Left colon (tissue), 2 donors: ENCODE measurements at regions of chr2 and their contacts with region 1.

Region 1: GRCh38 chr2:218849721-218850120 is 9.9 kb upstream of the WNT6 start:
- DNase-seq: no peak
- ATAC-seq: no peak

Region 2: DNA sequence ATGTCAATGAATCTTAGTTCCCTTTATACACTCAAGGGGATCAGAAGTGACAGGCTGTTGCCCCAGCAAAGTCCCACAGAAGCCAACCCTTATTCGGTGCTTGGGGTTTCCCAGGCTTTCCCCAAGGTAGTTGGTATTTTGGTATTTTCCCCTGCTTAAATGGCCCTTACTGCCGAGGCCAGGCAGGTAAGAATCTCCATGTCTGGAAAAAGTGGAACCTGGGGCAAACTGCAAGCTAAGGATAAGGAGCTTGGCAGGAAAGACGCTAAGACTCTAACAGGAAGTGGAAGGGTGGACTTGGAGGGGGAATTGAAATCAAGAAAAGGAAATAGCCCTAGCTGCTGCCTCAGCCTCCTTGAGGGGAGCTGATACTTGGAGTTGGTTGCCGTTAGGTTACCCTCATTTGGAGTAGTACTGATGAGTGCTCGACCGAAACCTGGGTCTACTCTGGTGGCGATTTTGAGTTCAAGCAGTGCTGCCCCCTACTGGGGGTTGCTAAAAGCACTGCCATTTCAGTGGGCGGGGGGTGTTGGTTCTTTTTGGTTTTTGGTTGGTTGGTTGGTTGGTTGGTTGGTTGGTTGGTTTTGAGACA is 592.2 kb before region 1 on chr2:
- intact Hi-C with region 1: no loop called
- DNase-seq: peak in 1 of 2 donors; percentile 34
- ATAC-seq: peak; percentile 22

Region 3: DNA sequence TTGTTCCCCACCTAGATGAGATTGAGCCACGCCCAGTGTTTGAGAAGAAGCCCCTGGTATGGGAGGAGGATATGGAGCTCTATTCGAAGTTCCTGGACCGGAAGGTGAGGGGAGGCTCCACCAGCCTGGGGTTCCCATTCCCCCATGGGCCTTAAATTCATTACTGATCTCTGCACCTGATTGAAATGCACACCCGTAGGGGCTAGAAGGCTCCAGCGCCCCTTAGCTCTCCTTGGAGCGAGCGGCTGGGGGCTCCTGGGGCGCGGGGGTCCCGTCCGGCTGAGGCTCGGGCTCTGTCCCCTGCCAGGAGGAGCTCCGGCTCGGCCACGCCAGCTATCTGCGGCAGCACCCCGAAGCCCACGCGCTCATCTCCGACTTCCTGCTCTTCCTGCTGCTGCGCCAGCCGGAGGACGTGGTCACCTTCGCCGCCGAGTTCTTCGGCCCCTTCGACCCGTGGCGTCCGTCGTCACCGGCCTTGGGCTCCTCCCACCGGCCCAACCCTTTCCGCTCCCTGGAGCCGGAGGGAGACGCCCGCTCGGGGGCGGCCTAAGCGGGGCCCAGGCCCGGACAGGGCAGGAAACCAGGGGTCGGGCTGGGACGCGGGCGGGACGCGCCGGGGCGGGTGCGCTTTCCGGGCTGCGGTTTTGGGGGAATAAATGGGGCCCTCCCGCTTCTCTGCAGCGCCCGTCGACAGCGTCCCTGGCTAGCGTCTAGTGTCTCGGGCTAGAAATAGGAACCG is 482.1 kb before region 1 on chr2:
- intact Hi-C with region 1: no loop called
- DNase-seq: peak; percentile 91 to 93
- ATAC-seq: peak; percentile 95

Region 4: DNA sequence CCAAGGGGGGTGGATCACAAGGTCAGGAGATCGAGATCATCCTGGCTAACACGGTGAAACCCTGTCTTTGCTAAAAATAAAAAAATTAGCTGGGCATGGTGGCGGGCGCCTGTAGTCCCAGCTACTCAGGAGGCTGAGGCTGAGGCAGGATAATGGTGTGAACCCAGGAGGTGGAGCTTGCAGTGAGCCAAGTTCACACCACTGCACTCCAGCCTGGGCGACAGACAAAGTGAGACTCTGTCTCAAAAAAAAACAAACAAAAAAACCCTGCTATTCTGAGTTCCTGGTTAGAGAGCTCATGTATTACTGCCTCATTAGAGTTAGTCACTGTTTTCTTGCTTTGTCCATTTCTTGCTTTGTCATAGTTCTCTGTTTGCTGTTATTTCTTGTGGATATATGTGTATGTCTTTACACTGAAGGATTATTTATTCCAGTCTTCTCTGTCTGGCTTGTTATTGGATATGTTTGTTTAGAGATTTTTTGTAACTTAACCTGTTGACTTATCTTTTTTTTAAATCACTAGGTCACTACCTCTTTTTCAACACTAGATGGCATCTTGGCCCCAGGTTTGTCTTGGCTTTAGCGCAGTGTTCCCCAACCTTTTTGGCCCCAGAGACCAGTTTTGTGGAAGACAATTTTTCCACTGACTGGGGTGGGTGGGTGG is 122.1 kb before region 1 on chr2:
- intact Hi-C with region 1: loop called in 1 of 2 experiments (anchors 5 kb)
- DNase-seq: no peak
- ATAC-seq: no peak

Region 5: DNA sequence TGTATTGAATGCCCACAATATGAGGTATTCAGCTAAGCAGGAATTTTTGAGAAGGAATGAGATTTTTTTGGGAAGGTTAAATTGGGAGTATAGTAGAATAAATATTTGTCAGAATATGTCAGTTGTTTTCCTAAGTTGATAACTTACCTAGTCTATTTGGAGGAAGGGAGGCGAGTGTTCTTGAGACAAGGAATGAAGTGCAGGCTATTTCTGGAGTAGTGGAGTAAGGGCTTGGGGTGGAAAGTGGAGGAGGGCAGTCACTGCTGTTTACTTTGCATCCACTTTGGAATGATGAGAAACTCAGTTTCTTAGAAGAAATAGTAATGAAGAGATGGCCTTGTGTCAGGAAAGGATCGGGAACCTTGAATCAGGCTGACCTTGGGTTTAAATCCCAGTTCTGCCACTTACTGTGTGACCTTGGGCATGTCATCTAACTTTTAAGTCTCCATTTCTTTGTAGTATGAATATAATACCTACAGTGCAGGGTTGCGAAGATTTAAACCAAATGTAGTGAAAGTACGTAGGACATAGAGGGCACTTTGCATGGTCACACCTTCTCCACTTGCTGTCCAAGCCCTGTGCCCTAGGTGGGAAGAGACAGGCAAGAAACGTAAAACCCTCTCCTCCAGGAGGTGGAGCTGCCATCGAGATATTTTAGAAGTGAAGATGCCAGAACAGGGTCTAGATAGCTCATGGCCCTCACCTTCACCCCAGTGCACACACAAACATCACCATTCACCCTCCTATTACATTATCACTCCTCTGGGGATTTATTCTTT is 92.9 kb before region 1 on chr2:
- intact Hi-C with region 1: no loop called
- DNase-seq: no peak
- ATAC-seq: no peak

Region 6: GRCh38 chr2:219335373-219335786 is 485.7 kb after region 1 on chr2:
- intact Hi-C with region 1: no loop called
- DNase-seq: no peak
- ATAC-seq: no peak